ENCODE measurements at regions of chr5 and their contacts with region 1.

Region 1: DNA sequence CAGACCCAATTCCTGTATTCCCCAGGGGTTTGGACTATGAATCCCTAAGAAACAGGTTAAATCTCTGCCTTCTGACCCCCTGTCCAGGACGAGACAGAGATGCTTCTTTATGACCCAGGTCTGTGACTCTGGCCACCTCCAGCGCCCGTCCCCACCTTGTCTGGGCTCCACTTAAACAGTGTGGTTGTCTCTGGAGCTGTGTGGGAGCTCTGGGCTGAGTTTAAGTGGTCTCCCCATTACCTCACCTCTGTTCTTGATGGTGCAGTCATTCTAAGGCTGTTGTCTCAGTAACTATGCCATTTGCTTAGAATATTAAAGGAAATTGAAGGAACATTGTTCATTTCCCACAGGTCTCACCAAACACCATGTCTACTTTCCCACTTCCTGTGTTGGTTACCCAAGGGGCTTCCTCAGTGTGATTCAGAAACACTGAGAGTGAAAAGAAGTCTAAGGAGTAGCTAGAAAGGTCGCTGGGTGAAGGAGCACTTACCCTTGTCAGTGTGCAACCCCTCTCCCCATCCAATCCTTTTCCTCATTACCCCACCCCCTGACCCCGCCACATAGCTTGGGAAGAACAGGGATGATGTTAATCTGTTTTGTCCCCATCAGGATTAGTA is 127.8 kb upstream of the CKMT2 start:
- DNase-seq: no peak
- ATAC-seq: peak; percentile 47
- H3K4me3 Mint-ChIP-seq: no peak overlapping the region
- H3K27ac Mint-ChIP-seq: peak overlapping the region; percentile 42
- H3K4me1 Mint-ChIP-seq: peaks cover 23% of the 10 kb centered on the region
- H3K27me3 Mint-ChIP-seq: no peaks in the 10 kb centered on the region

Region 2: DNA sequence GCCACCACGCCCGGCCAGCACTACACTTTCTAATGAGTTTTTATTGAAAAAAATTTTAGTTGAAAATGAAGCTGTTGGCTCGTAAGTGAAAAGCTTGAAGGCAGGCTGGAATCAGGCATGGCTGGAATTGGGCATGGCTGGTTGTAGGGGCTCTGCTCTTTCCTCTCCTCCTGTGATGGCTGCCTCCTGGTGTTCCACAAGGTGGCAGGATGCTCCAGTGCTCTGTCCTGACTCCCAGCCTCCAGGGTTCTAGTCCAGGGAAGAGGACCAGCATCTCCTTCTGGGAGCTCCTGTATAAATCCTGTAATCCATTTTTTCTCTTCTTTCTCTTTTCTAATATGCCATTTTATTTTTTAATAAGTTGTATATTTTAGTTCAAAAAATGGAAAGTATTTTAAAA is 393.4 kb before region 1 on chr5:
- CTCF ChIA-PET with region 1: interaction called, 4 read pairs
- POLR2A ChIA-PET with region 1: no interaction called
- intact Hi-C with region 1: loop called in 1 of 2 experiments (anchors 1 kb)
- DNase-seq: peak; percentile 23
- ATAC-seq: no peak
- H3K4me3 Mint-ChIP-seq: no peak overlapping the region
- H3K27ac Mint-ChIP-seq: no peak overlapping the region
- H3K4me1 Mint-ChIP-seq: peaks cover 4% of the 10 kb centered on the region
- H3K27me3 Mint-ChIP-seq: no peaks in the 10 kb centered on the region

Region 3: GRCh38 chr5:80935811-80936385 is 169.5 kb before region 1 on chr5:
- CTCF ChIA-PET with region 1: interaction called, 9 read pairs
- POLR2A ChIA-PET with region 1: no interaction called
- intact Hi-C with region 1: loop called in 1 of 2 experiments (anchors 5 kb)
- DNase-seq: no peak
- ATAC-seq: no peak
- H3K4me3 Mint-ChIP-seq: no peak overlapping the region
- H3K27ac Mint-ChIP-seq: no peak overlapping the region
- H3K4me1 Mint-ChIP-seq: peaks cover 6% of the 10 kb centered on the region
- H3K27me3 Mint-ChIP-seq: no peaks in the 10 kb centered on the region

Region 4: GRCh38 chr5:81091199-81091598 is 14.2 kb before region 1 on chr5:
- CTCF ChIA-PET with region 1: interaction called, 10 read pairs
- POLR2A ChIA-PET with region 1: no interaction called
- intact Hi-C with region 1: no loop called
- DNase-seq: no peak
- ATAC-seq: no peak
- H3K4me3 Mint-ChIP-seq: no peak overlapping the region
- H3K27ac Mint-ChIP-seq: peak overlapping the region; percentile 40
- H3K4me1 Mint-ChIP-seq: no peaks in the 10 kb centered on the region
- H3K27me3 Mint-ChIP-seq: no peaks in the 10 kb centered on the region

Region 5: GRCh38 chr5:81334304-81335061 is 229.1 kb after region 1 on chr5:
- CTCF ChIA-PET with region 1: no interaction called
- POLR2A ChIA-PET with region 1: no interaction called
- intact Hi-C with region 1: no loop called
- DNase-seq: no peak
- ATAC-seq: no peak
- H3K4me3 Mint-ChIP-seq: no peak overlapping the region
- H3K27ac Mint-ChIP-seq: no peak overlapping the region
- H3K4me1 Mint-ChIP-seq: no peaks in the 10 kb centered on the region
- H3K27me3 Mint-ChIP-seq: no peaks in the 10 kb centered on the region